Right cardiac atrium (tissue), 5 donors: ENCODE measurements at regions of chr4 and their contacts with region 1.

Region 1: GRCh38 chr4:173669460-173670179 is 139.6 kb upstream of the HAND2 start:
- DNase-seq: no peak
- ATAC-seq: peak; percentile 91 to 96
- H3K4me3 ChIP-seq: no peak overlapping the region
- H3K27ac ChIP-seq: no peak overlapping the region
- H3K4me1 ChIP-seq: no peaks in the 10 kb centered on the region
- H3K27me3 ChIP-seq: no peaks in the 10 kb centered on the region

Region 2: DNA sequence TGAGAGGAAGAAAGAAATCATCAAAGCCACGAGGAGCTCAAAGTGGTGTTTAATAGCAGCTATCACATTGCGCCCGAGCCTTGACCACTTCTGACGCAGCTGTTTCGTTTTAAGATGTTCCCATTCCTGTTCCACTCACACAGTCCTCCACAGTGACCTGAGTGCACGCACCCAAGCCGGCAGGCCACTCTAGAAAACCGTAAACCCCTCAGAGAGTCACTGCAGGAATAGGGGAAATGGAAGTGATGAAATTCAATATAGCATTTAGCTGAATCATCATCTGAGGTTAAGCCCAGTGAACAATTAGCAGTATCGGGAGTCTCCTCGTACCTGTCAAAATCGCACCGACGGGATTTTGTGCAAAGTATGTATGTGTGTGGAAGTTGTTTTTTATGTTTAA is 121.7 kb before region 1 on chr4:
- intact Hi-C with region 1: loop called in 1 of 4 experiments (anchors 10 kb)
- DNase-seq: peak in 1 of 3 donors; percentile 55
- ATAC-seq: peak; percentile 70 to 83
- H3K4me3 ChIP-seq: no peak overlapping the region
- H3K27ac ChIP-seq: no peak overlapping the region
- H3K4me1 ChIP-seq: no peaks in the 10 kb centered on the region
- H3K27me3 ChIP-seq: no peaks in the 10 kb centered on the region